Heart left ventricle (tissue), 16 donors: ENCODE measurements at regions of chr5 and their contacts with region 1.

Region 1: GRCh38 chr5:95130941-95131340 is 154.0 kb downstream of the MCTP1 start:
- DNase-seq: peak in 2 of 5 donors; percentile 30 to 45
- ATAC-seq: peak in 1 of 4 donors; percentile 90
- H3K4me3 ChIP-seq: no peak overlapping the region
- H3K27ac ChIP-seq: peak overlapping the region in 1 of 12 donors; percentile 4
- H3K4me1 ChIP-seq: no peaks in the 10 kb centered on the region
- H3K27me3 ChIP-seq: no peaks in the 10 kb centered on the region
- CTCF ChIP-seq: no peak
- POLR2A ChIP-seq: no peak

Region 2: GRCh38 chr5:95081500-95081960 is 49.4 kb before region 1 on chr5:
- intact Hi-C with region 1: loop called in 1 of 10 experiments (anchors 10 kb)
- DNase-seq: peak; percentile 25 to 72 (median 47)
- ATAC-seq: peak in 3 of 4 donors; percentile 71 to 88 (median 73)
- H3K4me3 ChIP-seq: peak overlapping the region in 11 of 12 donors; percentile 17 to 62 (median 46)
- H3K27ac ChIP-seq: peak overlapping the region in 10 of 12 donors; percentile 30 to 85 (median 49)
- H3K4me1 ChIP-seq: peaks cover 0 to 24% (median 0%) of the 10 kb centered on the region in 12 donors
- H3K27me3 ChIP-seq: no peaks in the 10 kb centered on the region
- CTCF ChIP-seq: no peak
- POLR2A ChIP-seq: no peak